GM18951 (cell line): ENCODE measurements at regions of chr5 and their contacts with region 1.

Region 1: GRCh38 chr5:157312492-157312891 is 46.6 kb downstream of the CYFIP2 start:
- POLR2A ChIP-seq: no peak

Region 2: DNA sequence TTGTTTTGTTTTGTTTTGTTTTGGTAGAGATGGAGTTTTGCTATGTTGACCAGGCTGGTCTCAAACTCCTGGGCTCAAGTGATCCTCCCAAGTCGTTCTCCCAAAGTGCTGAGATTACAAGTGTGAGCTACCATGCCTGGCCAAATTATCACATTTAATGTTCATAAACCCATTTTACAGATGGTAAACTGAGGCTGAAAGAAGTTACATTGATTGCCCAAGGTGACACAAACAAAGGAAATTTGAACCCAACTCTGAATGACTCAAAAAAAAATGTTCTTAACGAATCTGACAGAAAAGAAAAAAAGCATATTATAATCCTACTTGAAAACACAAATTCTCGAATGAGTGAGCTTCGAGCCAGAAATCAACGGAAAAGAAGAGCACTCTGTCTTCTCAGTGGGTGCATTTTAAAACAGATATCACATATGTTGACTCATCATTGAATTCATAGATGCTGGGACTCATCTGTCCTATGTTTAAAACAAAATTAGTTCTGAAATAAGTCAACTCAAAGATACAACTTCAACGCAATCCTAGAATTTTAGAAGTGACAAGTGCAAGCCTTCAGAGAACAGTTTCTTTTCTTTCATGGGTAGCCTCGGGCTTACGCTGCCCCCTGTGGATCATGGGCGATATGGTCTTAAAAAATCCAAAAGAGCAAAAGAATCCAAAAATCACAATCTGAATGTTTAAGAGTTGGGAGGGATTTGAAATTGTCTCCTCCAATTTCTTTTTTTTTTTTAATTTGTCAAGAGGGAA is 377.9 kb before region 1 on chr5:
- in situ Hi-C with region 1: loop called (anchors 25 kb)
- POLR2A ChIP-seq: no peak

Region 3: DNA sequence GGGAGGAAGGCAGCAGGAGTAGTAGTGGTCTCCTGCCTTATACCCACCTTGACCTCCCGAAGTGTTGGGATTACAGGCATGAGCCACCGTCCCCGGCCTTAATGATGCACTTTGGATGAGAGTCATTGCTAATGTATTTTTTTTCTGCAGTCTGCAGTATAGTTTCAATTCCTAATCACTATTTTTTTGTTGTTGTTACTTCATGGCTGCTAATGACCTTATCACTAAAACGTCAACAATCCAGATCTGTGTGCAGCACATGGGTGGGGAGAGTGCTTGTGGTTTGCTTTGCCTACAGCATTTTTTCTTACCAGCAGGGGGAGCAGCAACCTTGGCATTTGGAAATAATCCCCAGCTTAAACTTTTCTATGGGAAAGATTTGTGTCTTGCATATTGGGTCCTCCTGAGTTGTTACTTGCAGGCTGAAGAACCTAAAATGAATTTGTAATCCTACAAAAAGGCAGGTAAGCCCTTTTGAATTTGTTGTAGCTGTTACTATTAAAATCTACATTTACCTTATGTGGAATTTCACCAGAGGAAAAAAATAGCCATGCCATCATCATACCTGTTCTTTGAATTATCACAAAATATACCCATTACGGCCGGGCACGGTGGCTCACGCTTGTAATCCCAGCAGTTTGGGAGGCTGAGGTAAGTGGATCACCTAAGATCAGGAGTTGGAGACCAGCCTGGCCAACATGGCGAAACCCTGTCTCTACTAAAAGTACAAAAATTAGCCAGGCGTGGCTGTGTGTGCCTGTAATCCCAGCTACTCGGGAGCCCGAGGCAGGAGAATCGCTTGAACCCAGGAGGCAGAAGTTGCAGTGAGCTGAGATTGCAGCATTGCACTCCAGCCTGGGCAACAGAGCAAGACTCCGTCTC is 163.5 kb before region 1 on chr5:
- in situ Hi-C with region 1: loop called (anchors 5 kb)
- POLR2A ChIP-seq: no peak

Region 4: DNA sequence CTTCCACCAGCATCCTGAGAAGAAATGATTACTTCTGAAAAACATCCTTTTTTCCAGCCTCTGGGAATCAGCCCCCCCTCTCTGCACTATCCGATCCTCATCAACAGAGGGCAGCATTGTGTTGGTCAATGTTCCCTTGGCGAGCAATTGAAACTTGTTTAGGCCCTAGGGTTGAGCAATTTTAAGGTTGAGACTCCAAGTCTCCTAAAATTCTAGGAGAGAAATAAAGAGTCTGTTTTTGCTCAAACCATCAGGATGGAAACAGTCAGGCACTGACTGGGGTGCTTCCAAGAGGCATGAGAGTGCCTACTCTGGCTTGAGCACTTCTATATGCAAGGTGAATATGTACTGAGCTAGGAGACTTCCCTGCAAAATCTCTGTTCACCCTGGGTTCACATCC is 58.9 kb before region 1 on chr5:
- in situ Hi-C with region 1: loop called (anchors 10 kb)
- POLR2A ChIP-seq: no peak